HepG2 (cell line): ENCODE measurements at regions of chr11 and their contacts with region 1.

Region 1: DNA sequence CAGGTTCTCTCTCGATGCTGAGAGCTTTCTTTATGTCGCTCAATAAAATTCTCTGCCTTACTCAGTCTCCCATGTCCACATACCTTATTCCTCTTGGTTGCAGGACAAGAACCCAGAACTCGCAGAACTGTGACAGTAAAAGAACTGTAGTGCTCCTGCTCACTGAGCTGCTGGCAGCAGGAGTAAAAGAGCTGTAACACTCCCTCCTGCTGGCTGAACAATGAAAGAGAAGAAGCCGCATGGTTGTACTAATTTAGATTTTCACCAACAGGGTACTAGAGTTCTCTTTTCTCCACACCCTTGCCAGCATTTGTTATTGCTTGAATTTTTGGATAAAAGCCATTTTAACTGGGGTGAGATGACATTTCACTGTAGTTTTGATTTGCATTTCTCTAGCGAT is 433.2 kb downstream of the GUCY1A2 start:
- DNase-seq: peak; percentile 20
- ATAC-seq: peak; percentile 75
- H3K4me3 ChIP-seq: no peak overlapping the region
- H3K27ac ChIP-seq: no peak overlapping the region
- H3K4me1 ChIP-seq: no peaks in the 10 kb centered on the region
- H3K27me3 ChIP-seq: no peaks in the 10 kb centered on the region
- CTCF ChIP-seq: peak; percentile 54
- EP300 ChIP-seq: no peak
- POLR2A ChIP-seq: no peak
- RAD21 ChIP-seq: 0 out of 2 replicates have a peak, but pooled peaks have one; percentile 17

Region 2: DNA sequence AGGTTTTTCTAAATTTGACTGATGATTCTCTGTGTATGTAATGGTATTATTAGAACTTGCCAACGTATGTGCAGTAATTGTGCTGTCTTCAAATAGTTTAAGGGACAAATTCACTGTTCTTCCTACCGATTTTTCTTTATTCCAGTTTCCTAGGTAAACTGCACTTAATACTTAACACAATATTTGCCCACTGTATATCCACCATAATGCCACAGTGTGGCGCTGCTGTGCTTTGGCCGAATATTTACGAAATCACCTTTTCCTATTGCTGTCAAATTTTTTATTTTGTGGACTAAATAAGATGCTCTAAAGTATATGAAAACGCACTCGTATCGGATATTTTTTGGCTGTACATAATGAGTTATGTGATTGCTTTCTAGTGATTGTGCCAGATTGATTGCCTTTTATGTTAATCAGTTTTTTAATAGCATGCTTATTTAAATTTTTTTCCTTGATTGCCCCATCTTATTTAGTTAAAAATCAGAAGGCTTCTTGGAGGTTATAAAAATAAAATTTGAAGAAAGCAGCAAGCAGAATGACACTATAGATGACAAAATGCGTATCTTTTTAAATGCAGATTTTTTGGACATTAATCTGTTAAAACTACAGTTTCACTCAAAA is 497.1 kb before region 1 on chr11:
- CTCF ChIA-PET with region 1: no interaction called
- POLR2A ChIA-PET with region 1: no interaction called
- in situ Hi-C with region 1: no loop called
- intact Hi-C with region 1: loop called (anchors 5 kb)
- DNase-seq: peak; percentile 62
- ATAC-seq: peak; percentile 75
- H3K4me3 ChIP-seq: no peak overlapping the region
- H3K27ac ChIP-seq: no peak overlapping the region
- H3K4me1 ChIP-seq: peaks cover 19% of the 10 kb centered on the region
- H3K27me3 ChIP-seq: no peaks in the 10 kb centered on the region
- CTCF ChIP-seq: peak; percentile 81
- EP300 ChIP-seq: no peak
- POLR2A ChIP-seq: no peak
- RAD21 ChIP-seq: 0 out of 2 replicates have a peak, but pooled peaks have one; percentile 36

Region 3: GRCh38 chr11:106156290-106156937 is 428.6 kb before region 1 on chr11:
- CTCF ChIA-PET with region 1: no interaction called
- POLR2A ChIA-PET with region 1: no interaction called
- in situ Hi-C with region 1: no loop called
- intact Hi-C with region 1: loop called (anchors 1 kb)
- DNase-seq: peak; percentile 15
- ATAC-seq: peak; percentile 59
- H3K4me3 ChIP-seq: no peak overlapping the region
- H3K27ac ChIP-seq: no peak overlapping the region
- H3K4me1 ChIP-seq: no peaks in the 10 kb centered on the region
- H3K27me3 ChIP-seq: no peaks in the 10 kb centered on the region
- CTCF ChIP-seq: peak; percentile 53
- EP300 ChIP-seq: no peak
- POLR2A ChIP-seq: no peak
- RAD21 ChIP-seq: no peak

Region 4: DNA sequence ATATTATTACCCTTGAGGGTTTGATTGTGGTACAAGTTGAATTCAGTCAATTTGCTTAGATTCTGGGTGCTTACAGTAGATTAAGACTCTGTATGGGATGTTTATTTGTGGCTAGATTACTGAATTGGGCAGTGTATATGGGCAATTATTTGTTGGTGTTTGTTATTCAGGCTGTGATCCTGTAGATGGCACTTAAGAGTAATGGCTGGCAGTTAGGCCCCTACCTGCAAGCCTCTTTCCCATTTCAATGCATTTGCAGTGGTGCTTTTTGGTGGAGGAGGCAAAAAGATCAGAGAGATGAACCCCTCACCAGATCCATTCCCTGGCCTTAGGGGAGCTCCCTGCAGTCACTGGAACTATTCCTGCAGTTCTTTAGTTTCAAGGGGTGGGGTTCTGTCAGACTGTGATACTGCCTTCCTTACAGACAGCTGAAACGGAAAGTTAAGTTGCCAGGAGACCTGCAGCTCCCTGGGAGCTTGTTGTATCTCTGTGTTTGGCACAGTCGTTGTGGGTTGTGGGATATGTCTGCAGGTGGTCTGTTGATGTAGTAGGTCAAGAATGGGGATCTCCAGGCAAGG is 308.1 kb before region 1 on chr11:
- CTCF ChIA-PET with region 1: no interaction called
- POLR2A ChIA-PET with region 1: no interaction called
- in situ Hi-C with region 1: no loop called
- intact Hi-C with region 1: loop called (anchors 1 kb)
- DNase-seq: no peak
- ATAC-seq: no peak
- H3K4me3 ChIP-seq: no peak overlapping the region
- H3K27ac ChIP-seq: no peak overlapping the region
- H3K4me1 ChIP-seq: no peaks in the 10 kb centered on the region
- H3K27me3 ChIP-seq: no peaks in the 10 kb centered on the region
- CTCF ChIP-seq: peak; percentile 23; the same call in 1 of the 2 replicates
- EP300 ChIP-seq: no peak
- POLR2A ChIP-seq: no peak
- RAD21 ChIP-seq: no peak

Region 5: GRCh38 chr11:106306942-106307341 is 278.1 kb before region 1 on chr11:
- CTCF ChIA-PET with region 1: no interaction called
- POLR2A ChIA-PET with region 1: no interaction called
- in situ Hi-C with region 1: no loop called
- intact Hi-C with region 1: loop called (anchors 1 kb)
- DNase-seq: no peak
- ATAC-seq: no peak
- H3K4me3 ChIP-seq: no peak overlapping the region
- H3K27ac ChIP-seq: no peak overlapping the region
- H3K4me1 ChIP-seq: no peaks in the 10 kb centered on the region
- H3K27me3 ChIP-seq: no peaks in the 10 kb centered on the region
- CTCF ChIP-seq: no peak
- EP300 ChIP-seq: no peak
- POLR2A ChIP-seq: no peak
- RAD21 ChIP-seq: no peak

Region 6: GRCh38 chr11:106322111-106322510 is 262.9 kb before region 1 on chr11:
- CTCF ChIA-PET with region 1: no interaction called
- POLR2A ChIA-PET with region 1: no interaction called
- in situ Hi-C with region 1: no loop called
- intact Hi-C with region 1: loop called (anchors 1 kb)
- DNase-seq: no peak
- ATAC-seq: no peak
- H3K4me3 ChIP-seq: no peak overlapping the region
- H3K27ac ChIP-seq: no peak overlapping the region
- H3K4me1 ChIP-seq: no peaks in the 10 kb centered on the region
- H3K27me3 ChIP-seq: no peaks in the 10 kb centered on the region
- CTCF ChIP-seq: no peak
- EP300 ChIP-seq: no peak
- POLR2A ChIP-seq: no peak
- RAD21 ChIP-seq: no peak

Region 7: DNA sequence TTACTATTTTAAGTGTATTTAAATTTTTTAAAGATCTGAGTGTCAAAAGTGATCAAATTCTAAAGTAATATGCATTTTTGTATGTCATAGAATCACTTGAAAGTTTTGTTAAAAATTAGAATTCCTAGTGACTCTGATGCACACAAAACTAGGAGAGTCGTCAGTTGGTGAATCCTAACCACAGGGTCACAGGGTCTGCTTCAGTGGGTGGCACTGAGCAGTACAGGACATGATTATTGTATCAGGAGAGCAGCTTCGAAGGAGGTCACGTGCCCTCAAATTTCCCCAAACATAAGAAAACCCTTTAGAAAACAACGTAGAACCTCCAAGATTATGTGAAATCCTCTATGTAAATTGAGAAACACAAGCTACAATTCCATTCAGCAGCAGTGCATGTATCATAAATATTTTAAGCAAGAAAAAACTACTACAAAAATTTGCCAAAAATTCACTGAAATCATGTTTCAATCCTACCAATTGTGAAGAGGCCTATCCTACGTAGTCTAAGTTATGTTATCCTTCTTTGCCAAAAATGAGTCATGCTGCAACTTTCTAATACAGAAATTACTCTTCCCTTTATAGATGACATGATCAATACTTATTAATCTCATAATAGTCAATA is 184.0 kb before region 1 on chr11:
- CTCF ChIA-PET with region 1: no interaction called
- POLR2A ChIA-PET with region 1: no interaction called
- in situ Hi-C with region 1: no loop called
- intact Hi-C with region 1: loop called (anchors 10 kb)
- DNase-seq: no peak
- ATAC-seq: no peak
- H3K4me3 ChIP-seq: no peak overlapping the region
- H3K27ac ChIP-seq: no peak overlapping the region
- H3K4me1 ChIP-seq: no peaks in the 10 kb centered on the region
- H3K27me3 ChIP-seq: no peaks in the 10 kb centered on the region
- CTCF ChIP-seq: no peak
- EP300 ChIP-seq: no peak
- POLR2A ChIP-seq: no peak
- RAD21 ChIP-seq: no peak